ENCODE measurements at regions of chr12 and their contacts with region 1.

Region 1: DNA sequence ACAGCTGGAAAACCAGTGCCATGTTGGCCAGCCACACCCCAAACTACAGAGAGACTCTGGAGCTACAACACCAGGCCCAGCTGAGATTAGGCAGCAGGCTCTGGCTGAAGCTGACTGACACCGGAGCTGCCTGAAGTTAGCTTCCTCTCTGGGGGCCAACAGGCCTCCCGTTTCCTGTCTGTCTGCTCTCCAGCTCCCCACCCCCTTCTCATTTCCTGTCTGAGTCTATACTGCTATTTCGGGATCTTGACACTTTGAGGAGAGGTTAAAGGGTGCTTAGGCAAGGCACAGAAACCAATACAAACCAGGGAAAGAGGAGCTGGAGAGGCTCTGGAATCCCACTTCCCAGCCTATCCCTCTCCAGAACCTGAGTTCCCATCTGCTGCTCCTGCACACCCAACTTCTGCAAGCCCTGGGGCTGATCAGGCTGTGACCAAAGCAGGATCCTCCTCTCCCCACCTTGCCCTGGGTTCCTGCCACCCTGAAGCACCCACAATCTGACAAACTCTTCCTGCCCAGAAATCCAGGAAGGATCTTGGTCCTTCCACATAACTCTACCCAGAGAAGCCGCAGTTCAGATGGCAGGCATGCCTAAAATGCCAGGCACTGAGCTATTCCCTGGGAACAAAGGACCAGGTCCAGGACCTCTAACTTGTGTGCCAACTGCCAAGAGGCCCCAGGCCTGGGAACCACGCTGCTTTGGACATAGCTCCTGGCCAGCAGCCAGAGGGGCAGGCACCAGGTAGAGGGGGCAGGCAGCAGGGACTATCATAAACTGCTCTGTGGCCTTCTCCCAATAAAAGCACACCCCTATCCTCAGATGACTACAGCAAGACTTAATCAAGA is 39.9 kb downstream of the PRPF40B start:
- DNase-seq: peak; percentile 75
- ATAC-seq: peak; percentile 91
- H3K4me3 ChIP-seq: peak overlapping the region; percentile 39; the same call in 1 of the 2 replicates
- H3K27ac ChIP-seq: peak overlapping the region; percentile 86
- H3K4me1 ChIP-seq: peaks cover 58% of the 10 kb centered on the region
- H3K27me3 ChIP-seq: no peaks in the 10 kb centered on the region
- CTCF ChIP-seq: no peak
- EP300 ChIP-seq: peak; percentile 11 to 36; a peak in 2 of 4 replicates
- POLR2A ChIP-seq: peak; percentile 88
- RAD21 ChIP-seq: peak; percentile 23; the same call in 1 of the 2 replicates

Region 2: DNA sequence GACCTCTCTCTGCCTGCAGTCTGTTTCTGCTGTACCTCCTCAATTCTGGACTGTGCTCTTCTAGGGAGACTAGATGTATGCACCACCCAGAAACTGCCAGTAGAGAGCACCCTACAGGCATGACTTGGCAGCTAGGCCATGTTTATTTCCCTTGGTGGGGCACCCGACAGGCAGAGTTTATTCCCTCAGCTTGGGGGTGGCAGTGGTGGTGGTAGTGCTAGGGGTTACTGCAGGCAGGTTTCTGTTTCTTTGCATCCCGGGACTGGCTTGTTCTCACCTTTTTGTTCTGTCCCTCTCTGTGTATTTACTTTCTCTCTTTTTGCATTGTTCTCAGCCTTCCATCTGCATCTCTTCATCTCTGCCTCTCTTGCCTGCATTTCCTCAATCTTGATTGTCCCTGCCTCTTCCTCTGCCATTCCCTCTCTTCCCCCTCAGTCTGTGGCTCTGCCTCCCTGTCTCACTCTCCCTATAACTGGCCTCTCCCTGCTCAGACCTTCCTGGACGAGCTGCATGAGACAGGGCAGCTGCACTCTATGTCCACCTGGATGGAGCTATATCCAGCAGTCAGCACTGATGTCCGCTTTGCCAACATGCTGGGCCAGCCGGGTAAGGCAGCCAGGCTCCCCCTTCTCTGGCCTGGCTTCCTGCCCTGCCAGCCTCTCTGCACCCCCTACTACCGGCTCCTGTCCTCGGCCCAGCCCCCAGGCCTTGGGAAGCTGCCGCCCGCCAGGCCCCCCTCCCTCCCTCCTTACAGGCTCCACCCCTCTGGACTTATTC is 26.1 kb before region 1 on chr12:
- CTCF ChIA-PET with region 1: interaction called, 18 read pairs
- POLR2A ChIA-PET with region 1: no interaction called
- RAD21 ChIA-PET with region 1: interaction called, 5 read pairs
- SMC1A ChIA-PET with region 1: interaction called, 4 read pairs
- in situ Hi-C with region 1: no loop called
- intact Hi-C with region 1: no loop called
- DNase-seq: no peak
- ATAC-seq: peak; percentile 93
- H3K4me3 ChIP-seq: no peak overlapping the region
- H3K27ac ChIP-seq: no peak overlapping the region
- H3K4me1 ChIP-seq: peaks cover 3% of the 10 kb centered on the region; the same call in 1 of the 2 replicates
- H3K27me3 ChIP-seq: no peaks in the 10 kb centered on the region
- CTCF ChIP-seq: peak; percentile 73 to 77 (median 74)
- EP300 ChIP-seq: no peak
- POLR2A ChIP-seq: no peak; the same call in 1 of the 2 replicates
- RAD21 ChIP-seq: peak; percentile 84

Region 3: DNA sequence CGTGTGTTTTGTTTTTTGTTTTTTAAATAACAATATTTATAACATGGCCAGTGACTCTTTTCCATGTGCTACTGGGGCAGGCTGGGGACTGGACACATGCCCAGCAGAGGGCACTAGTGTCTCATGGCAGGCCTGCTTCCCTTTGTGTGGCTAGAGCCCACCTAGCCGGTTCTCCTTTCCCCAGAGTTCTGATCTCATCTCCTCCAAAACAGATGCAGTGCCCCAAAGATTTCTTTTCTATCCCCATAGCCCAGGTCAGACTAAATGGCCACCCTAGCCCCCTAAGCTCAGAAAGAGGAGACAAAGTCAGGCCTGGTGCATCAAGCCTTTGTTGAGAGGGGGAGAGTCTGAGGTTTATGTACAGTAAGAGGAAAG is 18.6 kb before region 1 on chr12:
- CTCF ChIA-PET with region 1: interaction called, 8 read pairs
- POLR2A ChIA-PET with region 1: interaction called, 3 read pairs
- RAD21 ChIA-PET with region 1: interaction called, 9 read pairs
- SMC1A ChIA-PET with region 1: interaction called, 19 read pairs
- in situ Hi-C with region 1: no loop called
- intact Hi-C with region 1: no loop called
- DNase-seq: peak; percentile 27
- ATAC-seq: peak; percentile 96
- H3K4me3 ChIP-seq: no peak overlapping the region
- H3K27ac ChIP-seq: peak overlapping the region; percentile 28; the same call in 1 of the 2 replicates
- H3K4me1 ChIP-seq: no peaks in the 10 kb centered on the region
- H3K27me3 ChIP-seq: no peaks in the 10 kb centered on the region
- CTCF ChIP-seq: peak; percentile 90 to 95 (median 91)
- EP300 ChIP-seq: no peak
- POLR2A ChIP-seq: no peak
- RAD21 ChIP-seq: peak; percentile 96

Region 4: GRCh38 chr12:49673446-49674317 is 10.5 kb after region 1 on chr12:
- CTCF ChIA-PET with region 1: interaction called, 23 read pairs
- POLR2A ChIA-PET with region 1: interaction called, 48 read pairs
- RAD21 ChIA-PET with region 1: interaction called, 45 read pairs
- SMC1A ChIA-PET with region 1: interaction called, 24 read pairs
- in situ Hi-C with region 1: no loop called
- intact Hi-C with region 1: no loop called
- DNase-seq: no peak
- ATAC-seq: no peak; the same call in 2 of the 3 replicates
- H3K4me3 ChIP-seq: no peak overlapping the region
- H3K27ac ChIP-seq: peak overlapping the region; percentile 92
- H3K4me1 ChIP-seq: peaks cover 56% of the 10 kb centered on the region
- H3K27me3 ChIP-seq: no peaks in the 10 kb centered on the region
- CTCF ChIP-seq: no peak
- EP300 ChIP-seq: no peak
- POLR2A ChIP-seq: no peak
- RAD21 ChIP-seq: no peak

Region 5: DNA sequence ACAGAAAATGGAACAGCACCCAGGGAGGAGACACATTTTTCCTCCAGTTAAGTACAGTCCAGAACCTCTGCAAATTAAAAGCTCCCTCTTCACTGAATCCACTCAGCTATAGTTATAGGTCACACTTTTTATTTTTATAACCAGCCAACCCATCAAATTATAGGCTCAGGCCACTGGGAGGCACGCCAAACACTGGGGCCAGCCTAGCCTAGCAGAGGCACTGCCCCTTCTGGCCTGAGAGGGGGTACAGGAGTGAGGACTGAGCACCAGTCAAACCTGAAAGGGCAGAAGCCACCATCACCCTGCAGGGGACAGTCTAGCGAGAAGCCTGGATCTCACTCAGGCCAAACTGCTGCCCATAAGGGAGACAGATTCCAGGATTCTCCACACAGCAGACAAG is 24.7 kb after region 1 on chr12:
- CTCF ChIA-PET with region 1: interaction called, 60 read pairs
- POLR2A ChIA-PET with region 1: interaction called, 24 read pairs
- RAD21 ChIA-PET with region 1: interaction called, 10 read pairs
- SMC1A ChIA-PET with region 1: interaction called, 40 read pairs
- in situ Hi-C with region 1: no loop called
- intact Hi-C with region 1: no loop called
- DNase-seq: no peak
- ATAC-seq: peak; percentile 20; the same call in 1 of the 3 replicates
- H3K4me3 ChIP-seq: no peak overlapping the region
- H3K27ac ChIP-seq: no peak overlapping the region
- H3K4me1 ChIP-seq: peaks cover 55% of the 10 kb centered on the region
- H3K27me3 ChIP-seq: no peaks in the 10 kb centered on the region
- CTCF ChIP-seq: no peak
- EP300 ChIP-seq: no peak
- POLR2A ChIP-seq: no peak
- RAD21 ChIP-seq: no peak

Region 6: DNA sequence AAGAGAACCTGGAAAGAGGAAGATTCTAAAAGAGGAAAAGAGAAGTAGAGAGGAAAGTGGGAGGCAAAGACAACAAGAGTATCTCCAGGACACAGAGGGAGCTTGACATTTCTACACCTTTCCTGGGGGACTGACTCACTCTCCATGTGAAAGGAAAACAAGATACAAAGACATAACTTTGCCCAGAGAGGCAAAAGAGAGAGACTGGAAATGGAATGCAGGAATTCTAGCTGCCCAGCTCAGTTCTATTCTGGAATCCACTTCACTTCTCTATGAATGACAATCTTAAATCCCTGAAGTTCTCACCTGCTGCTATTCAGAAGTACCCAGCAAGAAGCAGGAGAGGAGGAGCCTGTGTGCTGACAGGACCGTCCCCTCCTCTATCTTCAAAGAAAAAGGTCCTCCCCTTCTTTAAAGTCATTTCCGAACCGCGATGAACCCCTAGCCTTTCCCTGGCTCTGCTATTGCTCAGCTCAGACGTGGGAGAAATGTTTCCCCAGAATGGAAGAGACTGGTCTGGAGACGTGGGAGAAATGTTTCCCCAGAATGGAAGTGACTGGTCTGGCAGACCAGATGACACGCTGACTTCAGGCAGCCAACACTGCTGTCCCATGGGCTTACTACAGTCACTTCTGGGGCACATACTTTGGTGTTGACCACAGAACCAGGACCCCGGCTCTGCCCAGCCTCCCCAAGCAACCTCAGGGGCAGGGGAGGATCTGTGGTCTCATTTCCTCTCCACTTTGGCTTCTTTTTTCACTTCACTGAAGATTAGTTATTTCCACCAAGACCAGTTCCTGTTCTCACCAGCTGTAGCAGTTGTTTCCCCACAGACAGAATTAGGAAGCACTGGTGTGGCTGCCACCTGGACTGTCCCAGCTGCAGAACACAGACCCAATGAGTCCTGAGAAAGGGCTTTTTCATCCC is 35.7 kb after region 1 on chr12:
- CTCF ChIA-PET with region 1: interaction called, 87 read pairs
- POLR2A ChIA-PET with region 1: interaction called, 166 read pairs
- RAD21 ChIA-PET with region 1: interaction called, 154 read pairs
- SMC1A ChIA-PET with region 1: interaction called, 162 read pairs
- in situ Hi-C with region 1: no loop called
- intact Hi-C with region 1: loop called (anchors 1 kb)
- DNase-seq: peak; percentile 91
- ATAC-seq: peak; percentile 79
- H3K4me3 ChIP-seq: peak overlapping the region; percentile 54
- H3K27ac ChIP-seq: peak overlapping the region; percentile 91
- H3K4me1 ChIP-seq: peaks cover 48% of the 10 kb centered on the region
- H3K27me3 ChIP-seq: no peaks in the 10 kb centered on the region
- CTCF ChIP-seq: no peak
- EP300 ChIP-seq: peak; percentile 53 to 60; a peak in 2 of 4 replicates
- POLR2A ChIP-seq: no peak
- RAD21 ChIP-seq: 0 out of 2 replicates have a peak, but pooled peaks have one; percentile 10

Region 7: GRCh38 chr12:49740930-49741881 is 78.0 kb after region 1 on chr12 and contains the start of gene TMBIM6:
- CTCF ChIA-PET with region 1: interaction called, 5 read pairs
- POLR2A ChIA-PET with region 1: interaction called, 4 read pairs
- RAD21 ChIA-PET with region 1: interaction called, 11 read pairs
- SMC1A ChIA-PET with region 1: interaction called, 4 read pairs
- in situ Hi-C with region 1: no loop called
- intact Hi-C with region 1: no loop called
- DNase-seq: peak; percentile 99
- ATAC-seq: peak; percentile 96
- H3K4me3 ChIP-seq: peak within 1 kb of the TSS; percentile 77
- H3K27ac ChIP-seq: peak within 1 kb of the TSS; percentile 96
- H3K4me1 ChIP-seq: 0 out of 2 replicates have a peak, but pooled peaks cover 2% of the 10 kb centered on the region
- H3K27me3 ChIP-seq: no peaks in the 10 kb centered on the region
- CTCF ChIP-seq: peak; percentile 91 to 99 (median 98)
- EP300 ChIP-seq: no peak
- POLR2A ChIP-seq: peak; percentile 98
- RAD21 ChIP-seq: peak; percentile 80
- polyA plus RNA-seq, gene TMBIM6: 853 to 1,192 TPM

Region 8: DNA sequence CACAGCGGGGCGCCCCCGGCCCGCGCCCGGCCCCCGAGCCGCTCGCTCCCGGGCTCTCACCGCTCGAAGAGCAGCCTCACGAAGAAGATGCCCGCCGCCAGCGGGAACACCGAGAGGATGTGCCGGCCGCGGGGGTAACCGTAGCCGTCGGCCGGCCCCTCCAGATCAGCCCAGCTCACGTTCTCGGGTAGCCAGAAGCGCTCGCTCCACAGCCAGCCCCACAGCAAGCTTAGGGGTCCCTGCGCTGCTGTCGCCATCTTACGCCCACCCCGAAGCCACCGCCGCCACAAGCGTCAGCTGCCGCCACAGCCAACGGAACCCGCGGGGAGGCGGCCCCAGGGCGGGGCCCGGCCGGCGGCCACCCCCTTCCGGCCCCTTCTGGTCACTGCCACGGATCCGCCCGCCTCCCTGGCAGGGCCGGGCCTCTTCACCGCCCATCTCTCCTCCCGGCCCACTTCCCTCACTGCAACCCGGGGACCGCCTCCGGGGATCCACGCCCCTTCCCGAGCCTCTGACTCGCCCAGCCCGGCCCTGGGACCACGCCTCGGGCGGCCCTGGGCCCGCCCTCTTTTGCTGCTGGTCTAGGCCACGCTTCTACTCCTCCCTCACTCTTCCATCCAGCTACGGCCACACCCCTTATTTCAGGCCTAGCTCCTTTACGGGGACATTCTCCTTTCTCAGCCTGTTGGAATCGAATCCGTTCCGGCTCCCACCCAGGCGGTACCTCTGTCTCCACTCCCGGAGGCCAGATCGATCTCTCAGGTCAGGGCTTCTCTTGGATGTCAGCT is 504.0 kb after region 1 on chr12 and contains the start of gene CERS5:
- CTCF ChIA-PET with region 1: no interaction called
- POLR2A ChIA-PET with region 1: no interaction called
- RAD21 ChIA-PET with region 1: no interaction called
- SMC1A ChIA-PET with region 1: no interaction called
- in situ Hi-C with region 1: no loop called
- intact Hi-C with region 1: no loop called
- DNase-seq: peak; percentile 85
- ATAC-seq: peak; percentile 99
- H3K4me3 ChIP-seq: peak within 1 kb of the TSS; percentile 80
- H3K27ac ChIP-seq: peak within 1 kb of the TSS; percentile 71
- H3K4me1 ChIP-seq: no peaks in the 10 kb centered on the region
- H3K27me3 ChIP-seq: no peaks in the 10 kb centered on the region
- CTCF ChIP-seq: no peak
- EP300 ChIP-seq: peak in 1 of 2 experiments; percentile 22; a peak in 1 of 4 replicates
- POLR2A ChIP-seq: peak; percentile 87
- RAD21 ChIP-seq: no peak
- polyA plus RNA-seq, gene CERS5: 6.8 to 12.2 TPM

Measured in GM12878 (cell line).